ENCODE measurements at regions of chr1 and their contacts with region 1.

Region 1: DNA sequence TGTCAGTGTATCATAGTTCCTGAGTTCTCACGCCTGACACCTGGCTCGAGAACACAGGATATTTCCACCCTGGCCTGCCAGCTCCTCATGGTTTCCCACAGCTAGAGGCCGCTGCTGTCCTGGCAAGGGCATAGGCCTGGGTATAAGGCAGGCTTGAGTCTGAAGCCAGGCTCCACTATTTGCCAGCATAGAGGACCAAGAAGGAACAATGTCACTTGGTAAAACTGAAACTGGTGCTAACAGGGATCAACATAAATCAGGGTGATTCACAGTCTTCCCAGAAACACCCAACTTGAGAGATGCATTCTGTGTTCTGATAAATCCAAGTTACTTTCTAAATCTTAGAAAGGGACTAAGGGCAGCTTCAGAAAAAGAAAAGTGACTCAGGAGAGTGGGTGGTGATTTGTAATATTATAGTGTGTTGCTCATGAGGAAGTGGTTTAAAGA is 6.9 kb upstream of the S100A2 start:
- DNase-seq: peak; percentile 81 to 84
- H3K4me3 ChIP-seq: no peak overlapping the region
- H3K27ac ChIP-seq: peak overlapping the region; percentile 75
- H3K4me1 ChIP-seq: peaks cover 29% of the 10 kb centered on the region
- H3K27me3 ChIP-seq: no peaks in the 10 kb centered on the region
- CTCF ChIP-seq: peak; percentile 91

Region 2: DNA sequence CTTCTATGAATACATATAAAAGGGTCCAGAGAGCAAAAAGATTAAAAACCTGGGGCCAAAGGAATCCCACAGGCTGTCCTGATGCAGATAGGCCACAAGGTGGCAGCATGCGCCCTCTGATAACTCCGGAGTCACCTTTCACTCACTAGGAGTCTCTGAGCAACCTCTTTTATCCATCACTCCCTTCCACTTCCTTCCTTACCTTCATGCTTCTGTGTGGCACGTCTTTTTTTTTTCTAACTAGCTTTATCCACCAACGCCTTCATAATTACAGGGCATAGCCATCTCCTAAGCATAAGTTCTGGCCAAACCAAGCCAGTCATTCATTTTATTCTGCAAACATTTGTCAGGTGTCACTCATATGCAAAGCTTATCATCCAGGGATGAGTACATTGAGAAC is 220.1 kb before region 1 on chr1:
- CTCF ChIA-PET with region 1: interaction called, 4 read pairs
- POLR2A ChIA-PET with region 1: interaction called, 3 read pairs
- intact Hi-C with region 1: loop called (anchors 5 kb)
- DNase-seq: peak; percentile 57 to 61
- H3K4me3 ChIP-seq: no peak overlapping the region
- H3K27ac ChIP-seq: no peak overlapping the region
- H3K4me1 ChIP-seq: peaks cover 27% of the 10 kb centered on the region
- H3K27me3 ChIP-seq: peaks cover 8% of the 10 kb centered on the region; the same call in 1 of the 2 replicates
- CTCF ChIP-seq: peak; percentile 93

Region 3: GRCh38 chr1:153441238-153441933 is 131.2 kb before region 1 on chr1:
- CTCF ChIA-PET with region 1: no interaction called
- POLR2A ChIA-PET with region 1: no interaction called
- intact Hi-C with region 1: no loop called
- DNase-seq: no peak
- H3K4me3 ChIP-seq: no peak overlapping the region
- H3K27ac ChIP-seq: no peak overlapping the region
- H3K4me1 ChIP-seq: no peaks in the 10 kb centered on the region
- H3K27me3 ChIP-seq: peaks cover 69% of the 10 kb centered on the region
- CTCF ChIP-seq: no peak

Region 4: DNA sequence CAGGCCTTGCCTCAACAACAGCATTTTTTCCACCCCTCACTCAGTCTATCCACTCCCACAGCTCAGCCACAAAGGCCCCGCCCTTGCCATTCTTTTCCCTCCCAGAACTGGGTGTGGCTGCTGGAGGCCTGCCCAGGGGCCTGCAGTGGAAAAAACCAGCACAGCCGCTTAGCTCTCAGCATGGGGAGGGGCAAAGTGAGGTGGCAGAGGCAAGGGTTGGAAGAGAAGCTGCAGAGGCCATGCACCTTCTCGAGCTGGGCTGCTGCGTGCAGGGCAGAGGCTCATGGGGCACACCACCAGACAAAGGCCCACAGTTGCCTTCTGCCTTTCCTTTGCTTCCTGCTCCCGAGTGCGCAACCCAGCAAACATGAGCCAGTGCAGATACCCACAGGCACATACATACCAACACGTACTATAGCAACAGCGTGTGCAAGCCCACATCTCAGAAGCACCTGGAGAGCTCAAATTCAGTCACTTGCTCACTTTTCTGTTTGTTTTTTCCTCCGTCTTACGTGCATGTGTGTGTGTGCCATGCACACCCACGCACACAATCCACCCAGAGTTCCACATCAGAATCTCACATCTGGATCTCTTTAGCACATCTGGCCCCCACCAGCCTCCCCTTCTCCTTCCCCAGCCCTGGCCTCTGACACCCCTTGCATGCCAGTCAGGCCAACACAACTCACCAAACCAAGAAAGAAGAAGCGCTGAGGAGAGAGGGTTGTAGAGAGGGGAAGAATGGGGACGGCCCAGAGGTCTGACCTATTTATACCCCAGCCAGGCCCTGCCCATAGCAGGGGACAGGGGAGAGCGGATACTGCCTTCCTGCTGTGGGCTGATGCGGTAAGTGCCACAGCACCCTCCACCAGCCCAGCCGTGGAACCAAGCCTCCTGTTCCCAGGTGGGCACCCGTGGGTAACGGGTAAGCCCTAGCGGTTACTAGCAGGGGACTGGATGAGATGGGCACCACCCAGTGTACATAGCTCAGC is 27.2 kb before region 1 on chr1 and contains the start of gene S100A4:
- CTCF ChIA-PET with region 1: interaction called, 13 read pairs
- POLR2A ChIA-PET with region 1: interaction called, 3 read pairs
- intact Hi-C with region 1: loop called (anchors 2 kb)
- DNase-seq: peak; percentile 91 to 98
- H3K4me3 ChIP-seq: peak within 1 kb of the TSS; percentile 61
- H3K27ac ChIP-seq: peak within 1 kb of the TSS; percentile 67
- H3K4me1 ChIP-seq: peaks cover 91% of the 10 kb centered on the region
- H3K27me3 ChIP-seq: no peaks in the 10 kb centered on the region
- CTCF ChIP-seq: no peak
- total RNA-seq, gene S100A4: 303 and 346 TPM in 2 replicates

Region 5: DNA sequence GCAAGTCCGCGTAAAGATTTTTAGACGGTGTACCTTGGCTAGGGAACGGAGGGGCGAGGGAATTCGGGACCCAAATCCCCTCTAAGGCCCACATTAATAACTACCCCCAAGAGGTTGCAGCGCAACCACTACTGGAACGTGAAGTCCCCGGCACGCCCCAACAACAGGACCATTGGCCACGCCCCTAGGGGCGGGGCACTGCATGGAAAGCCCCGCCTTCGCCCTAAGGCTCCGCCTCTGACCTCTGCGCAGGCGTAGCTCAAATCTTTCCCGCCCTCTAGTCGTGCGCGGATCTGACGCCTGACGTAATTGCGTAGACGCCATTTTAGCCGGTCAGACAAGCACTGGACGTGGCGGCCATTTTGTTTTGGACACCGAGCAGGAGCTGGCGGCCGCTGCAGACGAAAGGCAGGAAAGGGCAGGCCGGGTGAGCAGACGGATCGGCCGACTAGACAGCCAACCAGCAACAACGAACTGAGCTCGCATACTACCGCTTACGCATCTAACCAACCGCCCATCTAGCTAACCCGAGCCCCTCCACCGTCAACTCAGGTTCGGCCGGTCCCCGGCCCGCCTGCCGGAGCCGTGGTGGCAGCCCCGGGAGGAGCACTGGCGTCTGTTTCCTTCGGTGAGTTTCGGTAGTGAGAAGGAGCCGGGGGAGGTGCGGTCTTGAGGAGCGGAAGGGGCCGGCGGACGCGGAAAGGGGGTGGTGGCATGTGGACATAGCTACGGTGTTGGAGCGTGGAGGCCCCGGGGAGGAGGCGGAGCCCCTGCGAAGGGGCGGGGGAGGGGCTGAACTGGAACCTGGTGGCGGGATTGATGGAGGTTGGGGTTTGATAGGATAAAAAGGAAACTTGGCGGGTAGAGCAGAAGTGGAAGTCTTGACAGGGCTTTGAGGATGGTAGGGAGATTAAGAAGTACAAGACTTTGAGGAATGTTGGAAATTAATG is 61.4 kb after region 1 on chr1 and contains the start of gene CHTOP:
- CTCF ChIA-PET with region 1: interaction called, 3 read pairs
- POLR2A ChIA-PET with region 1: interaction called, 12 read pairs
- intact Hi-C with region 1: loop called (anchors 1 kb)
- DNase-seq: peak; percentile 92 to 98
- H3K4me3 ChIP-seq: peak within 1 kb of the TSS; percentile 96
- H3K27ac ChIP-seq: peak within 1 kb of the TSS; percentile 100
- H3K4me1 ChIP-seq: peaks cover 20% of the 10 kb centered on the region
- H3K27me3 ChIP-seq: no peaks in the 10 kb centered on the region
- CTCF ChIP-seq: no peak
- total RNA-seq, gene CHTOP: 75.1 and 83.9 TPM in 2 replicates

Region 6: GRCh38 chr1:153749408-153750005 is 176.9 kb after region 1 on chr1:
- CTCF ChIA-PET with region 1: no interaction called
- POLR2A ChIA-PET with region 1: no interaction called
- intact Hi-C with region 1: loop called (anchors 1 kb)
- DNase-seq: peak; percentile 66 to 73
- H3K4me3 ChIP-seq: no peak overlapping the region
- H3K27ac ChIP-seq: no peak overlapping the region
- H3K4me1 ChIP-seq: no peaks in the 10 kb centered on the region
- H3K27me3 ChIP-seq: no peaks in the 10 kb centered on the region
- CTCF ChIP-seq: peak; percentile 94

Region 7: GRCh38 chr1:153805042-153805745 is 232.6 kb after region 1 on chr1:
- CTCF ChIA-PET with region 1: no interaction called
- POLR2A ChIA-PET with region 1: no interaction called
- intact Hi-C with region 1: no loop called
- DNase-seq: peak; percentile 33 to 70
- H3K4me3 ChIP-seq: no peak overlapping the region
- H3K27ac ChIP-seq: peak overlapping the region; percentile 86
- H3K4me1 ChIP-seq: peaks cover 8% of the 10 kb centered on the region
- H3K27me3 ChIP-seq: no peaks in the 10 kb centered on the region
- CTCF ChIP-seq: no peak

Region 8: DNA sequence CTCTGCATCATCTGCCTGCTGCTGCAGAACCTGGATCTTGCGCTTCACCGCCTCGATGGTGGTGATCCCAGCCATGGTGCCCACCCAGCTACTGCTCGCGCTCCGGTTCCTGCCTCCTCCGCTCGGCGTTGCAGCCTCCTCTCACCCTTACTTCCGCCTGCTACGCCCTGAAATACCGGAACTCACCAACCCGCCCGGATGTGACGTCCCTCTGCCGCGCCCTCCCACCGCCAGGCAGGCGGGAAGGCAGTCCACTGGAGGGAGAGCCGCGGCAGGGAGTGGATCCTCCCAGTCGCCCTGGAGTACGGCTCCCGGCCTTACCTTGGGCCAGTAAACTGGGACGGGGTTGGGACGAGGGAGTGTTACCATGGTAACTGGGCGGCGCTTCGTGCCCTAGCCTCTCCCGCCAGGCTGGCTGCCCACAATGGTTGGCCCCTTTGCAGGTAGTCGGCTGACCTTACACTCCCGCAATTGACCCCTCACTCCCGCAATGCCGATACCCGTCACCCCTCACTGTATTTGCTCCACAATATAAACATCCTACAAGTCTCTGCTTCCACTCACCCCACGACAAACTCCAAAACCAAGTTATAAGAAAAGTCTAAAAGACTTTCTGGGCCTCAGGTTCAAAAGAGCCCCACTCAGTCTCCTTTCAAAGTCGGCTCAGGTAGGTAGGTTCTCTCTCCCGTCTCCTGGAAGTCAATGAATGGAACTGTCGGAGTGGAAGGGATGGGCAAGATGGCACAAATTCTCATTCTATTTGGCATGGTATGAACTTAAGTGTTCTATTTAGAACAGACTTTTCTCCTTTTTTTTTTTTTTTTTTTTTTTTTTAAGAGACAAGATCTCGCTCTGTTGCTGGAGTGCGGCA is 610.7 kb after region 1 on chr1:
- CTCF ChIA-PET with region 1: no interaction called
- POLR2A ChIA-PET with region 1: no interaction called
- intact Hi-C with region 1: loop called (anchors 2 kb)
- DNase-seq: peak; percentile 97 to 98
- H3K4me3 ChIP-seq: peak overlapping the region; percentile 83
- H3K27ac ChIP-seq: peak overlapping the region; percentile 74
- H3K4me1 ChIP-seq: peaks cover 24% of the 10 kb centered on the region
- H3K27me3 ChIP-seq: no peaks in the 10 kb centered on the region
- CTCF ChIP-seq: no peak

Region 9: GRCh38 chr1:154391086-154391770 is 818.6 kb after region 1 on chr1:
- CTCF ChIA-PET with region 1: no interaction called
- POLR2A ChIA-PET with region 1: no interaction called
- intact Hi-C with region 1: no loop called
- DNase-seq: no peak
- H3K4me3 ChIP-seq: no peak overlapping the region
- H3K27ac ChIP-seq: no peak overlapping the region
- H3K4me1 ChIP-seq: no peaks in the 10 kb centered on the region
- H3K27me3 ChIP-seq: no peaks in the 10 kb centered on the region
- CTCF ChIP-seq: no peak

Measured in PC-9 (cell line).